Activated CD4-positive, alpha-beta T cell treated with anti-CD3 and anti-CD28 coated beads for 36 hours (primary cell): ENCODE measurements at regions of chr16 and their contacts with region 1.

Region 1: DNA sequence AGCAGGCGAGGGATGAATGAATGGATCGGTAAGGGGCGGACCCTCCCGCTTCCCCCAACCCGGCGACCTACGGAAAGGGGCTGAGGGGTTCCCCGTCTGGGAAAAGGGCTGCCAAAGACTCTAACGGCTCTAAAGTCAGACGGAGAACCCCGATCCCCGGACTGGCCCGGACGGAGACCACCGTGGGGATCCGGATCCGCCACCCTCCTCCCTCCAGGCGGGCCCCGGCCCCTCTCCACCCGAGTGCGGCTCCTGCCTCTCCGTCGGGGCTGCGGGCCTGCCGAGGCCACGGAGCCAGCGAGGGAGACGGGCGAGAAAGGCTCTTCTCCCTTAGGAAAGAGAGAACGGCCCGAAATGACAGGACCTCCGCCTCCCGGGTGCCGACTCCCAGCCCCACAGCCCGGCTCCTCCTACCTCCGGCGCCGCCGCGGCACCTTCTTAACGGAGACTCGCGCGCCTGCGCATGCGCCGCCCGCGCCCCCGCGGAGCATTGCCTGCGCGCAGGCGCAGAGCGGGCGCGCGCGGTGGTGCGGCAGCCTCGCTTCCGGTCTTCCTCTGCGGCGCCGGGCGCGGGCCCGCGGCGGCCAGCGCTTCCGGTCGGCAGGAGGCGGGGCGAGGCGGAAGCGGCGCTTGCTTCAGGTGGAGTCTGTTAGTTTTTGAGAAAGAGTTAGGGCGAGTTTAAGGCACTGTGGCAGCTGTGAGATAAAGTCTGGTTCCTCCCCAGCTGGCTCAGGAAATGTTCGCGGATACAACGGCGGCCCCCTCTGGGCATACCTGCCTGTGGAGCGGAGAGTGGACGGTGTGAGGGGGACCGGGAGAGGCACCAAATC is at the start of gene SLX4:
- DNase-seq: peak; percentile 95
- ATAC-seq: peak; percentile 90
- H3K4me3 Mint-ChIP-seq: peak within 1 kb of the TSS; percentile 100
- H3K27ac Mint-ChIP-seq: peak within 1 kb of the TSS; percentile 98
- H3K4me1 Mint-ChIP-seq: peaks cover 41% of the 10 kb centered on the region
- H3K27me3 Mint-ChIP-seq: no peaks in the 10 kb centered on the region
- total RNA-seq, gene SLX4: 10.7 to 11.7 TPM

Region 2: DNA sequence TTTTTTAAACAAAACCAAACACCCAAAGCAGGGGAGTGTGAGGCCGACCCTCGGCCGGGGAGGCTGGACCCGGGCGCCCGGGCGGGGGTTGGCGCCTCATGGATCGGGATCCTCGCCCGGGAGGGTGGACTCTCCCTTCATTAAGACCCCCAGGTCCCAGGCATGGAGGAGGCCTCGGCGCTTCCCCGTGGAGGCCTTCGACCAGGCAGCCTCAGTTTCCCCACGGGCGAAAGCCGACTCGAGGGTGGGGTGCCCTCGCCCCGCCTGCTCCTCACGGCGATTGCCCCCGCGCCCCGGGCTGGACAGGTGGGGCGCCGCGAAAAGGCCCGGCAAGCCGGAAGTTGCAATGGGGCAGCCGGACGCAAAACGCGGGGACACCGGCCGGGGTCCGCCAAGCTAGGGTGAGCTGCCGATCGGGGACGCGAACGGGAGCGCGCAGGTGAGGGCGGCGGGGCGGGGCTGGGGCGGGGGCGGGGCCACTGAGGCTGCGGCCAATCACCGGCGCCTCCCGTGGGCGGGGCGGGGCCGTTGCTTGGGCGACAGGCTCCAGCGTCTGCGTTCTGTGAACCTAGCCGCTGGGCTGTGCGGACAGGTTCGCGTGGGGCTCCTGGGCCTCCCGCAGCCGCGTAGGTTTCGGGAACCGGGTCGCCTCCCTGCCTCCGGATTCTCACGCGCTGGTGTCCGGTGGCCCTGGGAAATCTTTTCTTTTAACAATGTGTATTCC is 505.0 kb before region 1 on chr16:
- CTCF ChIA-PET with region 1: no interaction called
- POLR2A ChIA-PET with region 1: no interaction called
- intact Hi-C with region 1: loop called in 1 of 2 experiments (anchors 10 kb)
- DNase-seq: peak; percentile 96
- ATAC-seq: peak; percentile 88
- H3K4me3 Mint-ChIP-seq: peak overlapping the region; percentile 76
- H3K27ac Mint-ChIP-seq: peak overlapping the region; percentile 94
- H3K4me1 Mint-ChIP-seq: peaks cover 31% of the 10 kb centered on the region
- H3K27me3 Mint-ChIP-seq: no peaks in the 10 kb centered on the region

Region 3: DNA sequence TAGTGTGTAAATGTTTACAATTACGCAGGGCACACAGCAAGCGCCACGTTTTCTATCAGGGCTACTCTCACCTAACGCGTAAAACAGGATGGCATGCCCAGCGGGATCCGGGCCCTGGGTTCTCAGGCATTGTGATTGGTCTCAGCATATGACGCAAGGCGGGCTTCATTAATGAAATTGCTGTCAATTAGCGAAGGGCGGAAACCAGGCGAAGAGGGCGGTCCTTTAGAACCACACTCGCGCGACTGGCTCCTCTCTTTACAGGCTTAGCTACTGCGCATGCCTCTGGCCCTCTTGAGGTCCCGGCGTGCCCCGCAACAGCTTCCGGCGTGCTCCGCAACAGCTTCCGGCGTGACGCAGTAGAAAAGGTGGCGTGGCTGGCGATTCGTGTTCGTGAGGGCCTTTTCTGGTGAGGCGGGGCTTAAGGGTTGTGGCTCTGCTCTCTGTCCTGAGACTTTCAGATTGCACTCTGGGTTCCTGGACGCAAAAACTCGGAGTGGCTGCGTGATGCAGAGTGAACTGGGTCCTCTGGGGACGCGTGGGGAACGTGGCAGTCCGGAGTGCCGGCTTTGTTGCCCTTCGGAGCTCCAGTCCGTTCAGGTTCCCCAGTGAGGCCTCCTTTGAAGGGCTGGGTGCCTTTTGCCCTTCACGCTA is 246.5 kb before region 1 on chr16:
- CTCF ChIA-PET with region 1: no interaction called
- POLR2A ChIA-PET with region 1: no interaction called
- intact Hi-C with region 1: loop called in 1 of 2 experiments (anchors 1 kb)
- DNase-seq: peak; percentile 94
- ATAC-seq: peak; percentile 98
- H3K4me3 Mint-ChIP-seq: peak overlapping the region; percentile 76
- H3K27ac Mint-ChIP-seq: peak overlapping the region; percentile 91
- H3K4me1 Mint-ChIP-seq: peaks cover 8% of the 10 kb centered on the region
- H3K27me3 Mint-ChIP-seq: peaks cover 6% of the 10 kb centered on the region

Region 4: GRCh38 chr16:3503523-3503922 is 107.8 kb before region 1 on chr16:
- CTCF ChIA-PET with region 1: no interaction called
- POLR2A ChIA-PET with region 1: no interaction called
- intact Hi-C with region 1: loop called in 1 of 2 experiments (anchors 2 kb)
- DNase-seq: peak; percentile 77
- ATAC-seq: peak; percentile 60
- H3K4me3 Mint-ChIP-seq: peak overlapping the region; percentile 65
- H3K27ac Mint-ChIP-seq: peak overlapping the region; percentile 91
- H3K4me1 Mint-ChIP-seq: peaks cover 62% of the 10 kb centered on the region
- H3K27me3 Mint-ChIP-seq: no peaks in the 10 kb centered on the region

Region 5: DNA sequence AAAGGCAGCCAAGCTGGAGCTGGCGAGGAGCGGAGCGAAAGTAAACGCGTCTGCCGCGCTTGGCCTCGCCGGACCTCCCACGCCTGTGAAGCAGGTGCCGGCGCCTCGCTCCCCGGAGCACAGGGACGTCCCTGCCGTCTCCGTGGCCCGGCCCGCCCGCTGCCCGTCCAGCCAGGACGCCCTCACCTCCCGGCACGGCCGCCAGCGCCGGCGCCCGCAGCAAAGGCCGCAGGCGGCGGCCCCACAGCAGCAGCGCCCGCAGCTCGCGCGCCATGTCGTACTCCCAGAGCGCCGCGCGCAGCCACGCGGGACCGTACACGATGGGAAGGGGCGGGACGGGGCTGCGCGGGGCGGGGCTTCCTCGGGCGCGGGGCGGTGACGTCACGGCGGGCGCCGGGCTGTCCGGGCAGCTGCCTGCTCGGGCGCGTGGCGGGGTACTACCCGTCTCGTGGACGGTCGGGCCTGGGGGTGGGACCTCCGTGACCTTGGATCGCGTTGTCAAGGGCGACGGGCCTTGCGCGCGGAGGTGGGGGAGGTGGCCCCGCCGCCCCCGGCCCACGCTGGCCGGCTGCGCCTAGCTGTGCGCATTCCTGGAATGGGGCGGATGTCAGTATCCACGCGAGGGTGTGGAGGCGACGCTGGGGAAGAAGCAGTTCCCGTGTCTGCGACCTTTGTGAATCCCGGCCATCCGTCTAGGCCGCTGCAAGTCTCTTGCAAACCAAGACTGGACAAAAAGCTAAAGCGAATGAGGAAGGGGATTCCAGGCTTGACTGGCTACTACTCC is 106.1 kb after region 1 on chr16 and contains the start of gene TRAP1:
- CTCF ChIA-PET with region 1: no interaction called
- POLR2A ChIA-PET with region 1: no interaction called
- intact Hi-C with region 1: loop called in 1 of 2 experiments (anchors 1 kb)
- DNase-seq: peak; percentile 95
- ATAC-seq: peak; percentile 95
- H3K4me3 Mint-ChIP-seq: peak within 1 kb of the TSS; percentile 89
- H3K27ac Mint-ChIP-seq: peak within 1 kb of the TSS; percentile 92
- H3K4me1 Mint-ChIP-seq: peaks cover 44% of the 10 kb centered on the region
- H3K27me3 Mint-ChIP-seq: no peaks in the 10 kb centered on the region
- total RNA-seq, gene TRAP1: 306 to 360 TPM

Region 6: GRCh38 chr16:4183237-4184036 is 572.1 kb after region 1 on chr16:
- CTCF ChIA-PET with region 1: no interaction called
- POLR2A ChIA-PET with region 1: no interaction called
- intact Hi-C with region 1: loop called in 1 of 2 experiments (anchors 5 kb)
- DNase-seq: peak; percentile 94
- ATAC-seq: peak; percentile 95
- H3K4me3 Mint-ChIP-seq: peak overlapping the region; percentile 76
- H3K27ac Mint-ChIP-seq: peak overlapping the region; percentile 47
- H3K4me1 Mint-ChIP-seq: peaks cover 6% of the 10 kb centered on the region
- H3K27me3 Mint-ChIP-seq: no peaks in the 10 kb centered on the region